ENCODE measurements at regions of chr6 and their contacts with region 1.

Region 1: DNA sequence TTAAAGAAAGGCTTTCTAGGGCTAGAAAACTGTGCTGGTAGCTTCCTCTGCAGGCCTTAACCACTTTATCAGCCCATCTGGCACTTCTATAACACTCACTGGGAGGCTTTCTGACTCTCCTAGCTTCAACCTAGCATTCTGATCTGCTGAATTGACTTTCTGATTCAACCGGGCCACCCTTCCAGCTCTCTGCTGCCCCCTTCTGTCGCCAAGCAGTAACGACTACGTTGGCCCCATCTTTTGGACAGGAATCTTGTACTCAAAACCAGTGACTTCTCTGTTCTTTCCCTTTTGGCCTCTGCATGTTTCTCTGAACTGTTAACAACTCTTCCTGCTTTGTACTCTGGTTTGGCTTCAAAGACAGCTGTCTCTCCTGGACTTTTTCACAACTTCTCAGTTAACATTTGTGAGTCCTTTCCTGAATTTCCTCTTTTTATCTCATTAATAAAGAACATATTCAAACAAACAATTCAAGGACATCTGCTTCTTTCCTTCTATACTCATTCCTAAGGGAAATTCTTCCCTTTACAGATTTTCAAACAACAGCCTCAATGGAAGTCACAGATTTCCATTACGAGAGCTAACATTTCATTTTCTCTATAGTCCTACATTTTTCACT is 43.9 kb upstream of the FAM135A start:
- DNase-seq: no peak
- H3K4me3 ChIP-seq: no peak overlapping the region
- CTCF ChIP-seq: peak; percentile 92

Region 2: DNA sequence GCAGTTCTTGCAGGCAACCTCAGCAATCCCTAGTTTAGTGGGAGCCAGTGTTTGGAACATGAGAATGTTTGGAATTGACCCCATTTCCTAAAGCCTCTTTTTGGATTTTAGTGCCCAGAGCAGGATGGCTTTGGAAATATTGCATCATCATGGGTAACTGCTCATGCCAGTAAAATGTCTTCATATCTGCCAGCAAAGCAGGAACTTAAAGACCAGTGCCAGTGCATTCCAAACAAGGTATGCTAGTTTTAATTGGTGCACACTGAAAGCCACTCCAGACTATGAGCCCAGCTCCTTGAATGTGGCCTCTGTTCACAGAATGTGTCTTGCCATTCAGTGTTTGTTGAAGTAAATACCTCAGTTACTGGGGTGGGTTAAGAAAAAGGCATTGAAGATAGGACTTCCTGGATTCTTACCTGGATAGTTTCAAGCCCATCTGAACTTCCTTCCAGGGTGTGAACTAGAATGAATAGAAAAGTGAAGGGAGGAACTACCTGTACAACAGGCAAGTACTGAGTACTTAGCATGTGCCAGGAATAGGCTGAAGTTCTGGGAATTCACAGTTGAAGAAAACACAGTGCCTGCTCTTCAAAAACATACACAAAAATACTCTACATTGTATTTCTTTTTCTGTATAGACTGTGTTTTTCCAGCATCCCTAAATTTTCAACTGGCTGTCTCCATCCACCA is 432.6 kb before region 1 on chr6:
- CTCF ChIA-PET with region 1: no interaction called
- POLR2A ChIA-PET with region 1: no interaction called
- DNase-seq: no peak
- H3K4me3 ChIP-seq: no peak overlapping the region
- CTCF ChIP-seq: no peak

Region 3: DNA sequence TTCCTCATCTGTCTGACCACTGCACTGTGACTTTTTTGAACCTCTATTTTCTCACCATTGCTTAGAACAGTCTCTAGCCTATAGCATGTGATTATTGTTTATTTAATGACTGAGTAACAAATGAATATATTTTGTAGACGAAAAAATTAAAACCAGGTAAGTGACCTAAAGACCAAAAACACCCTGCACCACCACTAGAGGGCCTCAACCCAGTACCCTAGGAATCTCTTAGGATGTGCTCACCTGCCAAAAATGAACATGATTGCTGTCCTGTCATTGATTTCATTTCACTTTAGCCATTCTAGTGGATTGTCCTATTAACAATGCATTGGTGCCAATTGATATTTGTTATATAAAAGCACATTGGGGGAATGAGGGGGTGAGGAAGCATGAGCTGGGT is 265.6 kb before region 1 on chr6:
- CTCF ChIA-PET with region 1: no interaction called
- POLR2A ChIA-PET with region 1: no interaction called
- DNase-seq: no peak
- H3K4me3 ChIP-seq: no peak overlapping the region
- CTCF ChIP-seq: peak; percentile 29

Region 4: DNA sequence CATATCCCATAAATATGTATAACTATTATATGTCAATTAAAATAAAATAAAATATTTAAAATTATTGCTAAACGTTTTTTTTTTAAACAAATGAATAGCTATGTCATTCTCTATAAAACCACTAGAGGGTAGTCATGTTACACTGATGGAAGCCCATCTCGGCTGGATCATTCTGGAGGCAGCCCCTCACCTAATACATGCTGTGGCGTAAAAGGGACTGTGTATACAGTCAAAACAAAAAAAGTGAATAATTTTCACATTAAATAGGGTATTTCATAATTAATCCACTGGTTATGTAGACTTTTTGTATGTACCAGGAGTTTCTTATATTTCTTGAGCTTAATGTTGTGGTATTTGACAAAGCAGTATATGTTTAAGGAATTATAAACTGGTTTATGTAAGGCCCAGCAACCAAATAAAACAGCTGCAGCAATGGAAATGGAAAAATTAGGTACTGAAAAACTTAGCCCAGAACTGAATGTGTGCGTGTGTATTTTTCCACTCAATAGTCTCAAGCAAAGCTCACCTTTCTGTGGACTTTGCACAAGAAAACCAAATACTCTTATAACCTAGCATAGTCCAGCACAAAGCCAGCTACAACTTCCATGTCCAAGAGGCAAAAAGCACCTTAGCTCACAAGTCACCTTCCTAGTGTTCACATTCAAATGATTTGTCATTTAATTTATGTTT is 148.3 kb before region 1 on chr6:
- CTCF ChIA-PET with region 1: interaction called, 31 read pairs
- POLR2A ChIA-PET with region 1: no interaction called
- DNase-seq: peak; percentile 1
- H3K4me3 ChIP-seq: no peak overlapping the region
- CTCF ChIP-seq: peak; percentile 28

Region 5: GRCh38 chr6:70310063-70310694 is 59.3 kb before region 1 on chr6:
- CTCF ChIA-PET with region 1: interaction called, 99 read pairs
- POLR2A ChIA-PET with region 1: no interaction called
- DNase-seq: no peak
- H3K4me3 ChIP-seq: no peak overlapping the region
- CTCF ChIP-seq: peak; percentile 37

Region 6: GRCh38 chr6:70353343-70353913 is 16.0 kb before region 1 on chr6:
- CTCF ChIA-PET with region 1: interaction called, 14 read pairs
- POLR2A ChIA-PET with region 1: no interaction called
- DNase-seq: no peak
- H3K4me3 ChIP-seq: no peak overlapping the region
- CTCF ChIP-seq: no peak

Region 7: GRCh38 chr6:70380271-70380670 is 10.8 kb after region 1 on chr6:
- CTCF ChIA-PET with region 1: interaction called, 10 read pairs
- POLR2A ChIA-PET with region 1: no interaction called
- DNase-seq: no peak
- H3K4me3 ChIP-seq: no peak overlapping the region
- CTCF ChIP-seq: no peak

Region 8: DNA sequence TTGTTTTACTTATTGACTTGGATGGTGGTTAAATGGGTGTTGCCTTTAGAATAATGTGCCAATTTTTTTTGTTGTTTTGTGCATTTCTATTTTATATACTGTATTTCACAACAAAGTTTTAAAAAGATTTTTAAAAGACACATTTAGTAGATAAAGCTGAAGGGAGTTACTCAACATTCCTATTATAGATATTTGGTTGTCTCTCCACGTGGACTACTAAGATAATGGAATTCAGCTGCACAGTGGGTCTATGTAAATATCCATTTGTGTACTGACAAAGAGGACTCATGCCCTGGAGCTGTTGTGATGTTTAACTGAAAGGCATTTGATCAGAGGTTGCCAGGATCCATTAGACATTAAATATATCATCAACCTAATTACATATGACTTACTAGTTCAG is 20.6 kb after region 1 on chr6:
- CTCF ChIA-PET with region 1: interaction called, 11 read pairs
- POLR2A ChIA-PET with region 1: no interaction called
- DNase-seq: no peak
- H3K4me3 ChIP-seq: no peak overlapping the region
- CTCF ChIP-seq: no peak

Region 9: GRCh38 chr6:70413114-70413991 is 43.9 kb after region 1 on chr6 and contains the start of gene FAM135A:
- CTCF ChIA-PET with region 1: interaction called, 25 read pairs
- POLR2A ChIA-PET with region 1: interaction called, 4 read pairs
- DNase-seq: peak; percentile 77
- H3K4me3 ChIP-seq: peak within 1 kb of the TSS; percentile 91
- CTCF ChIP-seq: no peak